ENCODE measurements at regions of chr12 and their contacts with region 1.

Region 1: DNA sequence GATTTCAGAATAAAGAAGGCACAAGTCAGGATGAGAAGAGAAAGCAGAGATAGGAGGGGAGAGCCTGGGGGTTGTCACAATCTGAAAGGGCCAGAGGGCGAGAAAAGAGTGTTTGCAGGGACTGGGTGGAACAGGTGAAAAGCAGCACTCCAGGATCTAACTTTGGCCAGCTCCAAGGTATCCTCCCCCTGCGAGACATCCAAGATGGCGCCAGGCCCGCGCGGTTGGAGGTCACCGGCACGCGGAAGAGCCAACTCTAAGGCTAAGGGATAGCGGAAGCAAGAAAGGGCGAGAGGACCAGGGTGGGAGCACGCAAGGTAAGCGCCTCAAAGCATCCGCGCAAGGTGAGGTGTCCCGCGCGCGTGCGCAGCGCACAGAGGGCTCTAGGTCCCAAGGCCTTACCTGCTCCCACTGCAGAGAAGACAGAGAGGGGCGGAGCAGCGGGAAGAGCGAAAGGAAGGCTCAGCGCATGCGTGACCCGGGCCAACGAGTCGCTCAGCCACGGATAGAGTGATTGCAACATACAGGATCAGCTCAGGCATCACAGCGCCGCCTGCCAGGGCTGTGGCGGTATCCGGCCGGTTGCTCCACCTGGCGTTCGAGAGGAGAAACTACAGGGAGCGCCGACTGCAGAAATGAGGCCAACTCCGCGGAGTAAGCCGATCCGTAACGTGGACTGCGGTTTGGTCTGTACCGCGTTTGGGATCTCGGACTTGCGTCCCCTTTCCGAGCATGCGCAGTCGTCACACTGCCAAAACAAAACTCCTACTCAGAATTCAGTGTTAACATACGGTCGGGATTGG is at the start of gene ATP5MC2:
- DNase-seq: peak; percentile 98
- ATAC-seq: peak; percentile 93
- H3K4me3 ChIP-seq: peak within 1 kb of the TSS; percentile 78 to 91
- H3K27ac ChIP-seq: peak within 1 kb of the TSS; percentile 79
- H3K4me1 ChIP-seq: peaks cover 9 to 42% of the 10 kb centered on the region in 2 experiments
- H3K27me3 ChIP-seq: no peaks in the 10 kb centered on the region
- CTCF ChIP-seq: peak; percentile 99 to 100 (median 99)
- POLR2A ChIP-seq: peak; percentile 86
- RAD21 ChIP-seq: peak; percentile 97
- total RNA-seq, gene ATP5MC2: 304 TPM

Region 2: GRCh38 chr12:53065975-53066931 is 609.6 kb before region 1 on chr12:
- CTCF ChIA-PET with region 1: no interaction called
- POLR2A ChIA-PET with region 1: no interaction called
- RAD21 ChIA-PET with region 1: no interaction called
- intact Hi-C with region 1: no loop called
- DNase-seq: peak; percentile 60
- ATAC-seq: peak; percentile 73
- H3K4me3 ChIP-seq: peak overlapping the region in 1 of 2 experiments; percentile 18; a peak in 2 of 4 replicates
- H3K27ac ChIP-seq: peak overlapping the region; percentile 67
- H3K4me1 ChIP-seq: peaks cover 18 to 52% of the 10 kb centered on the region in 2 experiments
- H3K27me3 ChIP-seq: no peaks in the 10 kb centered on the region
- CTCF ChIP-seq: peak; percentile 76 to 82 (median 82)
- POLR2A ChIP-seq: no peak
- RAD21 ChIP-seq: peak; percentile 97

Region 3: DNA sequence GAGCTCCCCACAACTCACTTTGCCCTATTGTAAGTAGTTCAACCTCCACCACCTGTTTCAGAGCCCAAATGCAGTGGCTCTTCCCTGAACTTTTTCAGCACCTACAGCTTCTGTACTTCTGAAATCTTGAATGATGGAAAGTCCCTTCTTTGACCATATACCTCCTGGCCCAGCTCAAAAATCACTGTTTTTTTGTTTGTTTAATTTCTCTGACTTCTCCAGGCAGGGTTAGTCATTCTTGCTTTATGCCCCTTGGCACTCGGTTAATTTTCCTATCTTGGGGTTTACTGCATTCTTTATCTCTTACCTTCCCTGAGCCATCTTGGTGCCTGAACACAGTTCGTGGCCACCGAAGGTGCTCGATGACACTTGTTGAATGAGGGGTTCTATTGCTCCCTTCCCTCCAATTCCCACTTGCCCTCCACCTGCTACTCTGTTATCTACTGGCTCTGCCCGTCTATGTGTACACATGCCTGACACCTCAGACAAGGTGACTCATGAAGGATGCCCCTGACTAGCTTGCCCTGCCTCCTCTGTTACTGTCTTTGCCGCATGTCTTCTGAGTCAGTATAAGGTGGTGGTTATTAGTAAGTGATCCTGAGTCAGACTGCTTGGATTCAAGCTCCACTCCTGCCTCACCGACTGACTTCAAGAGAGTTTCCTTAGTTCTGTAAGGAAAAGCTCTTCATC is 247.8 kb before region 1 on chr12:
- CTCF ChIA-PET with region 1: no interaction called
- POLR2A ChIA-PET with region 1: no interaction called
- RAD21 ChIA-PET with region 1: no interaction called
- intact Hi-C with region 1: no loop called
- DNase-seq: peak; percentile 80
- ATAC-seq: peak; percentile 96
- H3K4me3 ChIP-seq: no peak overlapping the region
- H3K27ac ChIP-seq: no peak overlapping the region
- H3K4me1 ChIP-seq: peaks cover 5 to 20% of the 10 kb centered on the region in 2 experiments
- H3K27me3 ChIP-seq: no peaks in the 10 kb centered on the region
- CTCF ChIP-seq: no peak
- POLR2A ChIP-seq: no peak
- RAD21 ChIP-seq: no peak

Region 4: DNA sequence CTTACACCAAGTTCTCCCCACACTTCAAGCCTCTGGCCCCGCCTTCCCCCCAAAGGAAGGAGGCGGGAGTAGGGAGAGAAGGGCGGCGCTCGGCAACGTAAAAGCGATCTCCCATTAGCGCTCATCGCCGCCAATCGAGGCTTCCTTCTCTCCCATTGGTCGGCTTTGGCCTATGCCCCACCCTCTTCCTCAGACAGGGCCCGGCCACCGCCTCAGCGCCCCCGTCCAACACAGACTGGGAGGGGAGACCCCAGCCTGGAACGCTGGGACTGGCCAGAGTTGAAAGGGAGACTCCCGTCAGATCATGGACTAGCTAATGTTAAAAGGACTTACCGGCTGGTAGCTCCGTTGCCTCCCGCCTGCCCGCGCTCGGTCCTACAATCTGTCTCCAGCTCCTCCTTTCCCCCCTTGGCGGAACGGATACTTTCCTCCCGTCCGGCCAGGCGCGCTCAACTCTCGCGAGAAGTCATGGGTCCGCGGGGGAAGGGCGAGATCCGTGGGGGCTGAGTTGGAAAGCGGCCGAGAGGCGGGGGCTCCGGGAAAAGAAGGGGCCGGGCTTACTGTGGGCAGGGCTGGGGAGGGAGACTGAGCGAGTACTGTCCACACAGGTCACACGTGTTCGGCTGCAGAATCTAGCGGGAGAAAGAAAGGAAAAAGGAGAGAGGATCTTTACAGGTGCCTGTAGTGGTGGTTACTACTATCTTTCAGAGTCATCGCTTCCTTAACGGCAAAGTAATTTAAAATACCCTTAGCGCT is 49.7 kb before region 1 on chr12 and contains the start of gene ATF7:
- CTCF ChIA-PET with region 1: interaction called, 3 read pairs
- POLR2A ChIA-PET with region 1: interaction called, 7 read pairs
- RAD21 ChIA-PET with region 1: no interaction called
- intact Hi-C with region 1: loop called (anchors 5 kb)
- DNase-seq: peak; percentile 97
- ATAC-seq: peak; percentile 97
- H3K4me3 ChIP-seq: peak within 1 kb of the TSS; percentile 77 to 90
- H3K27ac ChIP-seq: peak within 1 kb of the TSS; percentile 66
- H3K4me1 ChIP-seq: peaks cover 8 to 21% of the 10 kb centered on the region in 2 experiments
- H3K27me3 ChIP-seq: no peaks in the 10 kb centered on the region
- CTCF ChIP-seq: no peak
- POLR2A ChIP-seq: peak; percentile 83
- RAD21 ChIP-seq: no peak
- total RNA-seq, gene ATF7: 24.0 TPM

Measured in HCT116 (cell line).